Ovary (tissue), 10 donors: ENCODE measurements at regions of chr2 and their contacts with region 1.

Region 1: GRCh38 chr2:172095146-172095904 is 7.4 kb downstream of the DLX2 start:
- DNase-seq: peak in 3 of 5 donors; percentile 37 to 64 (median 47)
- H3K4me3 ChIP-seq: peak overlapping the region; percentile 27
- H3K27ac ChIP-seq: no peak overlapping the region
- H3K4me1 ChIP-seq: peaks cover 17% of the 10 kb centered on the region
- H3K27me3 ChIP-seq: peaks cover 28% of the 10 kb centered on the region
- CTCF ChIP-seq: no peak
- EP300 ChIP-seq: no peak
- POLR2A ChIP-seq: no peak

Region 2: DNA sequence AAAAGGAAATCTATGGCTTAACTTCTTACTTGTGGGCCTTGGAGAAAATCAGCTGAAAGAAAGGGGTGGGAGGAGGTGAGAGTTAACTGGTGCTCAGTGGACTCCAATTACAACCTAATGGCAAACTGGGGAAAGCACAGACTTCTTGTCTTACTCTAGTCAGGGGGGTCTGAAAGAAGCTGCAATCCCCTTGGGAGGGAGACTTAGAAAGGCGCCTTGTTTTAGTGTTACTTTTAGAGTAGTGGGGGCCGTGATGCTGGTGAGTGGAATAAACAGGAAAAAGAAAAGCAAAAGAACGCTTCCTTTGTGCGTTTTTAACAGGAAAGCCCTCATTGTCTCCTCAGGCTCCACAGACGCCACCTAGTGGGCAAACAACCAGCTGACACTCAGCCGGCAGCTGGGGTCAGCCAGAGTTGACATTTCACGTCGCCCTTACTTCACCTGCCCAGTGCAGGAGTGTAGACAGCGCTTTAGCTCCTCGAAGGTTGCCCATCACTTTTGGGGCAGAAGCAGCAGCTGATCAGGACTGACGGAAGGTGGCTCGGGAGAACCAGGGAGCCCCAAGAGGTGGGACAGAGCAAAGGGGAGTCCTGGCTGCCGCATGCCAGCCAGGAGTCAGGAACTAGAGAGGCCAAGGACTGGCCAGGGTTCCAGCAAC is 1222.2 kb before region 1 on chr2:
- intact Hi-C with region 1: no loop called
- DNase-seq: peak; percentile 20 to 69 (median 49)
- H3K4me3 ChIP-seq: no peak overlapping the region
- H3K27ac ChIP-seq: no peak overlapping the region
- H3K4me1 ChIP-seq: no peaks in the 10 kb centered on the region
- H3K27me3 ChIP-seq: no peaks in the 10 kb centered on the region
- CTCF ChIP-seq: peak in 2 of 3 donors; percentile 32 to 37
- EP300 ChIP-seq: no peak
- POLR2A ChIP-seq: no peak

Region 3: GRCh38 chr2:171692331-171692730 is 403.0 kb before region 1 on chr2:
- intact Hi-C with region 1: loop called in 1 of 4 experiments (anchors 10 kb)
- DNase-seq: no peak
- H3K4me3 ChIP-seq: no peak overlapping the region
- H3K27ac ChIP-seq: no peak overlapping the region
- H3K4me1 ChIP-seq: no peaks in the 10 kb centered on the region
- H3K27me3 ChIP-seq: no peaks in the 10 kb centered on the region
- CTCF ChIP-seq: no peak
- EP300 ChIP-seq: no peak
- POLR2A ChIP-seq: no peak